H1 (cell line): ENCODE measurements at regions of chr16 and their contacts with region 1.

Region 1: GRCh38 chr16:3087243-3088235 is 11.6 kb downstream of the ZSCAN10 start:
- DNase-seq: no peak
- H3K4me3 ChIP-seq: no peak overlapping the region
- H3K27ac ChIP-seq: no peak overlapping the region; the same call in 1 of the 2 replicates
- H3K4me1 ChIP-seq: peaks cover 0 to 6% (median 5%) of the 10 kb centered on the region in 4 experiments; a peak in 6 of 7 replicates
- H3K27me3 ChIP-seq: no peaks in the 10 kb centered on the region
- CTCF ChIP-seq: peak; percentile 55 to 67 (median 65)
- EP300 ChIP-seq: no peak
- POLR2A ChIP-seq: peak in 1 of 2 experiments; percentile 72; a peak in 2 of 3 replicates
- RAD21 ChIP-seq: peak; percentile 25 to 51; a peak in 3 of 4 replicates

Region 2: GRCh38 chr16:3038256-3038655 is 49.3 kb before region 1 on chr16:
- CTCF ChIA-PET with region 1: interaction called, 3 read pairs
- POLR2A ChIA-PET with region 1: interaction called, 13 read pairs
- DNase-seq: peak in 1 of 2 experiments; percentile 63
- H3K4me3 ChIP-seq: no peak overlapping the region; a peak in 1 of 8 replicates
- H3K27ac ChIP-seq: no peak overlapping the region; the same call in 1 of the 2 replicates
- H3K4me1 ChIP-seq: peaks cover 3 to 19% (median 12%) of the 10 kb centered on the region in 4 experiments
- H3K27me3 ChIP-seq: peaks cover 0 to 11% (median 3%) of the 10 kb centered on the region in 4 experiments; a peak in 1 of 7 replicates
- CTCF ChIP-seq: no peak
- EP300 ChIP-seq: no peak
- POLR2A ChIP-seq: no peak
- RAD21 ChIP-seq: no peak

Region 3: DNA sequence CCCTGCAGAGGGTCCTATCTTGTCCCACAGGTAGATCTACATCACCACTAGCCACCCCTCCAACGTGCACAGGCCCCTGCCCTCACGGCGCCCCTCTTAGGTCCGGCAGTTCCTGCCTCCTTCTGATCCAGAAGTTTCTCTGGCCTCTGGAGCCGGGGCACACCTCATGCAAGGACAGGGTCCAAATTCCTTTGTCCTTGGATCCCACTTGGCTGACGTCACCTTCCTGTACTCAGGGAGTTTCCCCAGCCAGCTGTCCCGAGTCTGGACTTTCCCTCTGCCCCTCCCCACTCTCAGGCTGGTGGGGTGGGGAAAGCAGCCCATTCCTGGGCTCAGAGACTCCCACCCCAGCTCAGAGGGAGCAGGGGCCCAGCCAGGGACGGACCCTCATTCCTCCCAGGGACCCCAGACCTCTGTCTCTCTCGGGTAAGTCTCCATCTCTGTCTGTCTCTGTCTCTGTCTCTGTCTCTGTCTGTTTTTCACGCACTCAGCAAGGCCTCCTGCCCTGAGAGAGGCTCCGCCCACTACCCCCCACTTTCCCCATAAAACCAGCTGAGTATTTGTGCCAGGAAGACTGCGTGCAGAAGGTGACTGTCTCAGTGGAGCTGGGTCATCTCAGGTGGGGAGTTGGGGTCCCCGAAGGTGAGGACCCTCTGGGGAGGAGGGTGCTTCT is 22.3 kb before region 1 on chr16 and contains the start of gene IL32:
- CTCF ChIA-PET with region 1: interaction called, 30 read pairs
- POLR2A ChIA-PET with region 1: interaction called, 21 read pairs
- DNase-seq: no peak
- H3K4me3 ChIP-seq: no peak within 1 kb of the TSS
- H3K27ac ChIP-seq: peak within 1 kb of the TSS; percentile 23; the same call in 1 of the 2 replicates
- H3K4me1 ChIP-seq: peaks cover 0 to 3% (median 1%) of the 10 kb centered on the region in 4 experiments; a peak in 2 of 7 replicates
- H3K27me3 ChIP-seq: no peaks in the 10 kb centered on the region
- CTCF ChIP-seq: no peak
- EP300 ChIP-seq: no peak
- POLR2A ChIP-seq: no peak
- RAD21 ChIP-seq: no peak
- total RNA-seq, gene IL32: 2.0 and 2.7 TPM in 2 replicates

Region 4: DNA sequence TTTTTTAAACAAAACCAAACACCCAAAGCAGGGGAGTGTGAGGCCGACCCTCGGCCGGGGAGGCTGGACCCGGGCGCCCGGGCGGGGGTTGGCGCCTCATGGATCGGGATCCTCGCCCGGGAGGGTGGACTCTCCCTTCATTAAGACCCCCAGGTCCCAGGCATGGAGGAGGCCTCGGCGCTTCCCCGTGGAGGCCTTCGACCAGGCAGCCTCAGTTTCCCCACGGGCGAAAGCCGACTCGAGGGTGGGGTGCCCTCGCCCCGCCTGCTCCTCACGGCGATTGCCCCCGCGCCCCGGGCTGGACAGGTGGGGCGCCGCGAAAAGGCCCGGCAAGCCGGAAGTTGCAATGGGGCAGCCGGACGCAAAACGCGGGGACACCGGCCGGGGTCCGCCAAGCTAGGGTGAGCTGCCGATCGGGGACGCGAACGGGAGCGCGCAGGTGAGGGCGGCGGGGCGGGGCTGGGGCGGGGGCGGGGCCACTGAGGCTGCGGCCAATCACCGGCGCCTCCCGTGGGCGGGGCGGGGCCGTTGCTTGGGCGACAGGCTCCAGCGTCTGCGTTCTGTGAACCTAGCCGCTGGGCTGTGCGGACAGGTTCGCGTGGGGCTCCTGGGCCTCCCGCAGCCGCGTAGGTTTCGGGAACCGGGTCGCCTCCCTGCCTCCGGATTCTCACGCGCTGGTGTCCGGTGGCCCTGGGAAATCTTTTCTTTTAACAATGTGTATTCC is 18.8 kb after region 1 on chr16:
- CTCF ChIA-PET with region 1: interaction called, 293 read pairs
- POLR2A ChIA-PET with region 1: interaction called, 137 read pairs
- DNase-seq: peak in 1 of 2 experiments; percentile 97
- H3K4me3 ChIP-seq: peak overlapping the region; percentile 41 to 79 (median 64)
- H3K27ac ChIP-seq: peak overlapping the region; percentile 85
- H3K4me1 ChIP-seq: peaks cover 2 to 5% (median 4%) of the 10 kb centered on the region in 4 experiments; a peak in 5 of 7 replicates
- H3K27me3 ChIP-seq: no peaks in the 10 kb centered on the region
- CTCF ChIP-seq: no peak
- EP300 ChIP-seq: no peak
- POLR2A ChIP-seq: no peak; a peak in 1 of 3 replicates
- RAD21 ChIP-seq: no peak

Region 5: GRCh38 chr16:3158471-3159314 is 71.2 kb after region 1 on chr16:
- CTCF ChIA-PET with region 1: no interaction called
- POLR2A ChIA-PET with region 1: no interaction called
- DNase-seq: peak in 1 of 2 experiments; percentile 84
- H3K4me3 ChIP-seq: peak overlapping the region; percentile 65 to 92 (median 76)
- H3K27ac ChIP-seq: no peak overlapping the region
- H3K4me1 ChIP-seq: peaks cover 0 to 7% (median 4%) of the 10 kb centered on the region in 4 experiments; a peak in 3 of 7 replicates
- H3K27me3 ChIP-seq: peaks cover 0 to 10% (median 7%) of the 10 kb centered on the region in 4 experiments; a peak in 5 of 7 replicates
- CTCF ChIP-seq: no peak
- EP300 ChIP-seq: 0 out of 3 replicates have a peak, but pooled peaks of 1 of the 2 experiments have one; percentile 5
- POLR2A ChIP-seq: 0 out of 3 replicates have a peak, but pooled peaks of 1 of the 2 experiments have one; percentile 18
- RAD21 ChIP-seq: no peak

Region 6: GRCh38 chr16:3182608-3183444 is 95.3 kb after region 1 on chr16:
- CTCF ChIA-PET with region 1: no interaction called
- POLR2A ChIA-PET with region 1: no interaction called
- DNase-seq: peak in 1 of 2 experiments; percentile 99
- H3K4me3 ChIP-seq: peak overlapping the region; percentile 48 to 85 (median 82)
- H3K27ac ChIP-seq: no peak overlapping the region
- H3K4me1 ChIP-seq: no peaks in the 10 kb centered on the region; a peak in 2 of 7 replicates
- H3K27me3 ChIP-seq: peaks cover 0 to 38% (median 25%) of the 10 kb centered on the region in 4 experiments; a peak in 6 of 7 replicates
- CTCF ChIP-seq: peak; percentile 13 to 41 (median 38); a peak in 3 of 4 replicates
- EP300 ChIP-seq: no peak
- POLR2A ChIP-seq: no peak
- RAD21 ChIP-seq: peak in 1 of 2 experiments; percentile 12; a peak in 1 of 4 replicates